ENCODE measurements at regions of chr14 and their contacts with region 1.

Region 1: DNA sequence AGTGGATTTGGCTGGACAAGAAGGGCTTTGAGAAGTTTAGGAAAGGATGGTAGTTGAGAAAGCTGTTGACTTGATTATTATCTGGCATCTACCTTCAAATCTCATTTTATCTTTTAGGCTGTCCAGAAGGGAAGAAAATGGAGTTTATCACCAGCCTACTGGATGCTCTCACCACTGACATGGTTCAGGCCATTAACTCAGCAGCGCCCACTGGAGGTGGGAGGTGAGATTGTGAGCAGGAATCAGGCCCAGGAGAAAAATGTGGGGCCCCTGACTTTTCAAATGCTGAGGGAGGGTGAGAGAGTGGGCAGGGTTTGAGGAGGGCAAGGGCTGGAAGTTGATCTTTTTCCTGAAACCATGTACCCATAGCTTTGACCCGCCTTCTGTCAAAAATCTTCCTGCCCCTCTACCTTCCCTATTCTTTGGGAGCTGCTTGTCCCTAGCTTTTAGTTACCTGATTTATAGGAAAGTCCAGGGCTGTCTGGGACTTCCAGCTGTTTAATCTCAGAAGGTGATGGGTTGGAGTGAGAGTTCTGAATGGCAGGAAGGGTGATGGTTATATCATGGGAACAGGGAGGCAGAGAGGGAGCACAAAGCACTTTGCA is 134.2 kb downstream of the SMOC1 start:
- DNase-seq: peak; percentile 52
- H3K4me3 ChIP-seq: no peak overlapping the region
- H3K27ac ChIP-seq: no peak overlapping the region
- H3K4me1 ChIP-seq: peaks cover 0 to 5% (median under 1%) of the 10 kb centered on the region in 4 donors
- H3K27me3 ChIP-seq: no peaks in the 10 kb centered on the region
- CTCF ChIP-seq: peak; percentile 52 to 67 (median 61)
- EP300 ChIP-seq: no peak
- POLR2A ChIP-seq: no peak

Region 2: DNA sequence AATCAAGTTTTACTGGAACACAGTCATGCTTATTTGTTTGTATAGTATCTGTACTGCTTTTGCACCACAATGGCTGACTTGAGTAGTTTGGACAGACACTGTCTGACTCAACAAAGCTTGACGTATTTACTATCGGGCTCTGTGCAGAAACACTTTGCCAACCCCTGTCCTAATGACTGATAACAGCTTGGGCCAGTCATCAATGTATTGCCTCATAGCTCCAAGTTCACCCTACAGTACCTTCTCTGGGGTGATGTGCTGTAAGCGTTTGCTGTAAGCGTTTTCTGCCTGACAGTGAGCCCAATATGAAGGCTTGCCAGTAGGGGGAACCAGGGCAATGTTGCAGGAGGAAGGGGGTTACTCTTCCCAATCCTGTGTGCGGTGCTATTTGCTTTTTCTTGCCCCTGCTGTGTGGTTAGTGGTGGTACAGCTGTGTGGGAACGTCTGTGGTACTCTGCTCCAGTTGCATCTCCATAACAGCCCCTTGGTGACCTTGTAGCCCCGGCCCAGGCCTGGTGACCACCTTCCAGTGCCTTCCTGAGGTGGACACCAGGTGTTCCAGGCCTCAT is 433.3 kb before region 1 on chr14:
- in situ Hi-C with region 1: loop called (anchors 25 kb)
- intact Hi-C with region 1: no loop called
- DNase-seq: no peak
- H3K4me3 ChIP-seq: no peak overlapping the region
- H3K27ac ChIP-seq: no peak overlapping the region
- H3K4me1 ChIP-seq: peaks cover 0 to 2% (median under 1%) of the 10 kb centered on the region in 4 donors
- H3K27me3 ChIP-seq: peaks cover 24% of the 10 kb centered on the region
- CTCF ChIP-seq: peak in 1 of 5 experiments; percentile 34
- EP300 ChIP-seq: no peak
- POLR2A ChIP-seq: no peak

Region 3: GRCh38 chr14:70489579-70490175 is 476.3 kb after region 1 on chr14:
- in situ Hi-C with region 1: no loop called
- intact Hi-C with region 1: no loop called
- DNase-seq: no peak
- H3K4me3 ChIP-seq: no peak overlapping the region
- H3K27ac ChIP-seq: no peak overlapping the region
- H3K4me1 ChIP-seq: no peaks in the 10 kb centered on the region
- H3K27me3 ChIP-seq: no peaks in the 10 kb centered on the region
- CTCF ChIP-seq: no peak
- EP300 ChIP-seq: no peak
- POLR2A ChIP-seq: no peak

Measured in transverse colon (tissue), 4 donors.